T-cell (primary cell): ENCODE measurements at regions of chr11 and their contacts with region 1.

Region 1: DNA sequence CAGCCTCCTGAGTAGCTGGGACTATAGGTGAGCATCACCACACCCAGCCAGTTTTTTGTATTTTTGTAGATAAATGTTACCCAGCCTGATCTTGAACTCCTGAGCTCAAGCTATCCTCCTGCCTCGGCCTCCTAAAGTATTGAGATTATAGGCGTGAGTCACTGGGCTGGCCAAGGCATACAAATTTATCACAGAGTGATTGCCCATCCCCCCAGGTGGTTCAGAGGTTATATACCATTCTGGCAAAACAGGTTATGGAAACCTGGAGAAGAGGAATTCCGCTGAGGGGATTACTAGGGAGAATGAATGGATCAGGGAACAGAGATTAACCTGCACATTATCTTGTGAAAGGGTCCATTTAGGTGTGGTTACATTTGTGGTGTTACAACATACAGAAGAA is 8.0 kb downstream of the ATG13 start:
- DNase-seq: no peak
- ATAC-seq: no peak
- H3K4me3 ChIP-seq: no peak overlapping the region
- H3K4me3 Mint-ChIP-seq: no peak overlapping the region
- H3K27ac ChIP-seq: no peak overlapping the region
- H3K27ac Mint-ChIP-seq: no peak overlapping the region
- H3K4me1 ChIP-seq: peaks cover 0 to 5% of the 10 kb centered on the region in 2 experiments
- H3K4me1 Mint-ChIP-seq: peaks cover 28 to 37% (median 31%) of the 10 kb centered on the region in 3 donors
- H3K27me3 ChIP-seq: no peaks in the 10 kb centered on the region
- H3K27me3 Mint-ChIP-seq: no peaks in the 10 kb centered on the region

Region 2: GRCh38 chr11:46438211-46438610 is 187.2 kb before region 1 on chr11:
- CTCF ChIA-PET with region 1: no interaction called
- POLR2A ChIA-PET with region 1: interaction called in 1 of 2 experiments, 12 read pairs
- DNase-seq: no peak
- ATAC-seq: no peak
- H3K4me3 ChIP-seq: no peak overlapping the region
- H3K4me3 Mint-ChIP-seq: no peak overlapping the region
- H3K27ac ChIP-seq: no peak overlapping the region
- H3K27ac Mint-ChIP-seq: no peak overlapping the region
- H3K4me1 ChIP-seq: no peaks in the 10 kb centered on the region
- H3K4me1 Mint-ChIP-seq: no peaks in the 10 kb centered on the region
- H3K27me3 ChIP-seq: no peaks in the 10 kb centered on the region
- H3K27me3 Mint-ChIP-seq: no peaks in the 10 kb centered on the region

Region 3: GRCh38 chr11:46639197-46639839 is 13.9 kb after region 1 on chr11:
- CTCF ChIA-PET with region 1: no interaction called
- POLR2A ChIA-PET with region 1: interaction called in 1 of 2 experiments, 10 read pairs
- DNase-seq: no peak
- ATAC-seq: no peak
- H3K4me3 ChIP-seq: no peak overlapping the region
- H3K4me3 Mint-ChIP-seq: no peak overlapping the region
- H3K27ac ChIP-seq: no peak overlapping the region
- H3K27ac Mint-ChIP-seq: peak overlapping the region in 1 of 2 donors; percentile 8
- H3K4me1 ChIP-seq: peaks cover 0 to 2% of the 10 kb centered on the region in 2 experiments
- H3K4me1 Mint-ChIP-seq: peaks cover 18 to 23% (median 22%) of the 10 kb centered on the region in 3 donors
- H3K27me3 ChIP-seq: no peaks in the 10 kb centered on the region
- H3K27me3 Mint-ChIP-seq: no peaks in the 10 kb centered on the region